ENCODE measurements at regions of chr2 and their contacts with region 1.

Region 1: DNA sequence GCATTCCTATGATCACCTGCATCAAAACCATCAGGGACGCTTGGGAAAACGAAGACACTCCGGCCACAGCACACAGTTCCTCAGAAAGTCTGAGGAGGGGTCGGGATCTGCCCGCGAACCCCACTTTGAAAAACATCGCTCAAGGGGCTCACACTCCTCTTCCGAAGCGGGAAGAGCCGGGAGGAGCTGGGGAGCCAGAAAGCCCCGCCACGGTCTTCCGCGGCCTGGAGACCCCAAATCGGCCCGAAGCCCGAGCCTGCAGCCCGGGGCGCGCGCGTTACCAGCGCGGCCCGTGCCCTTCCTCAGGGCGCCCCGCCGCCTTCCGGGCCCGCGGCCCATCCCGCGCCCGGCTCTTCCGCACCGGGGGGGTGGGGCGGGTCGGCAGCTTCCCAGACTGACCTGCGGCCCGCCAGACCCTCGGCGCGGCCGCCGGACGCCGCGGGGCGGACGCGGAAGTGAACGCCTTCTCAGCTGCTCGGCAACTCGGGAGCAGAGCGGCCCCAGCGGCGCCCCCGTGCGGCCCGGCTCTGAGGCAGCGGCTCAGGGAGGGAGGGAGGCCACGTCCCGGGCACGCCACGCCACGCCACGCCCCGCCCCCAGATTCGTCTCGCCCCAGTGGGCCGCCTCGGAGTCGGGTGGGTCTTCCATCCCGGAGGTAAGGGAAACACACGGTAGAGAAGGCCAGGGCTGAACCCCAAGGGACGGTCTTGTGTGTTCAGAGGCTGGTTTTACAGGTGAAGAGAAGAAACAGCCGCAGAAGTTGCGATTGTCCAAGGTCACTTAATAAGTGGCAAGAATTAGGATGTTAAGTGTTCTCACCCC is at the start of gene KCTD18:
- DNase-seq: peak; percentile 98
- CTCF ChIP-seq: peak; percentile 91

Region 2: DNA sequence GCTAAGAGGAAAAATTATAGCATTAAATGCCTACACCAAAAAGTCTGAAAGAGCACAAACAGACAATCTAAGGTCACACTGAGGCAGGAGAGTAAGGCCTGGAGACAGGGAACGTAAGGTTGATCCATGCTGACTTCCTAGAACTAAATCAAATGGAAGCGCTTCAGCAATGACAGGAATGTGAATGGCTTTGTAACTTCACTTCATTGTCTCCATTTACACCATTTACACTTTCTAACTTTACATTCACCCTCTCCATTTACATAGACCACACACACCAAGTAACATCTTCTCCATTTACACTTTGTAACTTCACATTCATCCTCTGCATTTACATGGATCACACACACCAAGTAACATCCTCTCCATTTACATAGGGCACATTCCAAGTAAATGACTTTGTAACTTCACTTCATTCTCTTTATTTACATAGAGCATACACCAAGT is 306.4 kb before region 1 on chr2:
- CTCF ChIA-PET with region 1: no interaction called
- POLR2A ChIA-PET with region 1: no interaction called
- DNase-seq: no peak
- CTCF ChIP-seq: no peak

Region 3: DNA sequence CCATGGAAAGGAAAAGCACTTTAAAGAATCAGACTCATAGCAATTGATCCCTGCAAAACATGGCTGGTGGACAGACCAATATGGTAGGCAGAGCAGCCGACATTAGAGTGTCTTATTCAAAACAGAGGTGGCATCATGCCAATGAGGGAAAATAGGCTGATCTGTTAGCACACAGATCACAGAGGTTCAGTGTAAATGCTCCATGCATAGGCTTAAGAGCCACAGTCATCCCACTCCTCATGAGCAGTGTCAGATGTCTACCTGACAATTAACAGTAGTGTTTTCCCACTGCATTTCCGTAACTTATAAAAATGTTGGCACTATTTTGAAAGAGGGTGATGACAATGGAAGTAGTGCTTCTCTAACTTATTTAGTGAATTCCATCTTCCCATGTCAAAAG is 116.6 kb before region 1 on chr2:
- CTCF ChIA-PET with region 1: no interaction called
- POLR2A ChIA-PET with region 1: no interaction called
- DNase-seq: no peak
- CTCF ChIP-seq: no peak

Region 4: DNA sequence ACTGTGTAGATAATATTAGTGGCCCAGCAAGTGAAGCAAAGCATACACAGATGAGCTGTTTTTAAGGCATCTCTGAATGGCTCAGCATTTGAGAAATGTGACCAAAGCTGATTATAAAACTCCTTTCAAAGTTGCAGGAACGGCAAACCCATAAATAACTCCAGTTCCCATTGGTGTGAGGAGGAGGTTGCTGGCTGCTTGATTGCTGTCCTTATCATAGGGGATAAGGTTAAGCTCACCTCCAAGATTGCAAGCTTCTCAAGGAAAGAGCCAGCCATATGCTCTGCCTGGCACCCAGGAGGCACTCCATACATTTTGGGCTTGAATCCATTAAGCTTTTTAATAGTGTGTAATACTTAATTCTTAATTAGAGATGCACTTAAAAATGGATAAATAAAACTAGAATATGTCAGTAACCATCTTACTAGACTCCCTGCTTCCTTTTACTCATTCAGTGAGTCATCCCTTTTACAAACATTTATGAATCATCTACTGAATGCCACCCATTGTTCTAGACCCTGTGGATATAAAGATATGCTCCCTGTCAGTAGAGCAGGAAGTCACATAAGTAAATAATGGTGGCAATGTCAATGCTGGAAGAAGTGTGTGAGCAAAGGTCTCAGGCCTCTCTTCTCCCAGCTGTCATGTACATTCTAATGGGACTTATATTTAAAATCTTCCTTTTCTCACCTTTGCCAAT is 104.1 kb before region 1 on chr2:
- CTCF ChIA-PET with region 1: no interaction called
- POLR2A ChIA-PET with region 1: no interaction called
- DNase-seq: no peak
- CTCF ChIP-seq: no peak

Region 5: DNA sequence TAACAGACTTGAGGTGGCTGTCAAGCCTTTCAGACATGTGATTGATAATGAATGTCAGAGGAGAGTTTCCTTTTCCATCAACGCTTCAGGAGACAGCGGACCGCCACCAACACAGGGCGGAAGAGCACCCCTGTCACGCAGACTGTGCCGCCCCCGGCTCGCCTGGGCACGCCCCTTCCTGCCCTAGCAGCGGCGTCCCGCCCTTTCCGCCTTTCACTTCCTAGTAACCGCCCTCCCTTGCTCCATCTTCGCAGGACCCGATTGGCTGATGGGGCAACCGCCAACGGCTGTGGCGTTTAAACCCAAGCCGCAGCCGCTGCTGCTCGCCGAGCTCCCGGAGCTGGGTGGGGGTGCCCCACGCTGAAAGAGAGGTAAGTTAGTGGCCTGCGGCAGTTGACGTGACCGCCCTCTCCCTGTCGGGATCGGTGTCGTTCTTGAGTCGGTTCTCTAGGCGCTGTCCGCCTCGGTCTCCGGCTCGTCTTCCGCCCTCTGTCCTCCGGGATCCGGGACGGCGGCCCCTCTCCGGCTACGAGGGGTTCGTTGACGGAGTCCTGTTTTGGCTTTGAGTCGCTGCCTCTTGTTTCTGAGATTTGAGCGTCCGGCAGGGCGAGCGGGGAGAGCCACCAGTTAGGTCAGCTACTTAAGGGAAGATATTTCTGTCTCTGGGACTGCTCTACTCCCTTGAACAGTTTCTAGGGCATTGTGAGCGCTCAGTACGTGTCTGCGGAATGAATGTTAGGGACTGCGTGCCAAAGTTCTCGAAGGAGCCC is 16.2 kb after region 1 on chr2 and contains the start of gene SGO2:
- CTCF ChIA-PET with region 1: interaction called, 13 read pairs
- POLR2A ChIA-PET with region 1: no interaction called
- DNase-seq: peak; percentile 97
- CTCF ChIP-seq: no peak